ENCODE measurements at regions of chr20 and their contacts with region 1.

Region 1: DNA sequence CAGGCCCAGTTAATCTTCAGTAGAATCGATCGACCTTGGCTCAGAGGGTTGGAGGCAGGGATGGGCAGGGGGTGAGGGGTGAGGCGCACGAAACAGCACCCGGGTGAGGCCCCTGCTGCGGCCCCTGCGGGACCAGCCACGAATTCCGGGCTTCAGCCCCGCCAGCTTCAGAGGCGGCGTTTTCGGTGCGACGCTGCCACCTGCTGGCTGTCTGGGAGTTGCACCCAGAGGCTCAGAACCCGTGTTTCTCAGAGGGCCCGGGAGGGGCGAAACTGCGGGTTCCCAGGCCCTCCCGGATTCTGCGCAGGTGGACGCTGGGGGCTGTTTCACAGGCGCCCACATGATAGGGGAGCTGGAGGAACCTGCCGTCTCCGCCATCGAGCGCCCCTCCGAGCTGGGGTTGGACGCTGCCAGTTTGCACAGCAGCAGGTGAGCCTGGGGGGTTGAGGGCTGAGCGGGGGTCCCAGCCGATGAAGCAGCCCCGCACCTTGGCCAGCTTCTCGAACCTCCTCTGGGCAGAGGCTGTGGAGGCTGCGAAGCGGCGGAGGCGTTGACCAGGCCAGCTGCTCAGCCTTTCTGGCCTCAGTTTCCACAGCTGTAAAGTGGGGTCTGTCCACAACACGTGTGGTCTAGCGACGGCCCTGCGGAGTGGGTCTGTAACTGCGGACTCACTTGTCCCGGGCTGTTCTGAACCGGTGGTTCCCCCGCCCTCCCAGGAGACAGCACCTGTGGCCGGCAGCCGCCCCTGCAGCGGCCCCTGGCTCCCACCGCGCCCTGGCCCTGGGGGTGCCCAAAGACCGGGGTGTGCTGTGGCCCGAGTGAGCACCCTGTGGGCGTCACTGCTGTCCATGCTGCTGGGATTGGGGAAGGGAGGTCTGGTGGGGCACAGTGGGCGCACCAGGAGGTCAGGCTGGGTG is 2.5 kb upstream of the BHLHE23 start:
- H3K4me3 Mint-ChIP-seq: no peak overlapping the region
- H3K27ac Mint-ChIP-seq: no peak overlapping the region
- H3K4me1 Mint-ChIP-seq: peaks cover 20% of the 10 kb centered on the region
- H3K27me3 Mint-ChIP-seq: peaks cover 93% of the 10 kb centered on the region

Region 2: DNA sequence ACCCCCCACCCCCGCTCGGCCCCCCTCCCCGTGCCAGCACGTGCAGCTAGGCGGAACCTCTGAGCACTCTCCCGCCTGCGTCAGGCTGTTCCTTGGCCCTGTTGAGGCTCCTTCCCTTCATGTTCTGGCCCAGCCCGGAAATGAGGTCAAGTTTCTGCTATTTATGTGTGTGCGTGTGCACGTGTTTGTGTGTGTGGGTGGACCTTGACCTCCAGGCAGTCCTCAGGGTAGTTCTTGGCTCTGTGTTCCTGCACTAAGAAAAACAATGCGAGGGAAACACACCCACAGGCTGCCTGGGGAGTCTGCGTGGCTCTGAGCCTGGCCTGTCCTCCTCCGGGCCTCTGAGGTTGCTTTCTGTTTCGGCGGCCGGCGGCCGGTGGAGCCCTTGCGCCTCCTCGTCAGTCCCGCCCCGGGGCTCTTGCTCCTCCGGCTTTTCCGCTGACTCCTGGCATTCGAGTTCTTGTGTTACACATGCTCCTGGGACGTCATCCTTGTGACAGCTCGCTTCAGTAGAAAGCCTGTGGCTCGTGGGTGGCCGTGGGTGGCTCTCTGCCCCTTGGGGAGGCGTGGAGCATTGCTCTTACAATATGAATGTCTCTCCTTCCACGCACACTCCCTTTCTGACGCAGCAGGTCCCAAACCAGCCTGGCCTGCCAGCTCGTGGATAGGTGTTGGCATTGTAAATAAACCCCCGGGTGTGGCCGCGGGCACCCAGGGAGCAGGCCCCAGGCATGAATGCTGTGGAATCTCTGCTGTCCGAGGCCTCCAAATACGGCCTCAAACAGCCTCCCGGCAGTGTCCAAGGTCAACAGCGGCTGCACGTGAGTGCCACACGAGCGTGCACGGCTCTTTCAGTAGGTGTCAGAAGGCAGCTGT is 357.0 kb before region 1 on chr20:
- intact Hi-C with region 1: no loop called
- H3K4me3 Mint-ChIP-seq: peak overlapping the region; percentile 60
- H3K27ac Mint-ChIP-seq: peak overlapping the region; percentile 94
- H3K4me1 Mint-ChIP-seq: peaks cover 42% of the 10 kb centered on the region
- H3K27me3 Mint-ChIP-seq: peaks cover 8% of the 10 kb centered on the region

Region 3: DNA sequence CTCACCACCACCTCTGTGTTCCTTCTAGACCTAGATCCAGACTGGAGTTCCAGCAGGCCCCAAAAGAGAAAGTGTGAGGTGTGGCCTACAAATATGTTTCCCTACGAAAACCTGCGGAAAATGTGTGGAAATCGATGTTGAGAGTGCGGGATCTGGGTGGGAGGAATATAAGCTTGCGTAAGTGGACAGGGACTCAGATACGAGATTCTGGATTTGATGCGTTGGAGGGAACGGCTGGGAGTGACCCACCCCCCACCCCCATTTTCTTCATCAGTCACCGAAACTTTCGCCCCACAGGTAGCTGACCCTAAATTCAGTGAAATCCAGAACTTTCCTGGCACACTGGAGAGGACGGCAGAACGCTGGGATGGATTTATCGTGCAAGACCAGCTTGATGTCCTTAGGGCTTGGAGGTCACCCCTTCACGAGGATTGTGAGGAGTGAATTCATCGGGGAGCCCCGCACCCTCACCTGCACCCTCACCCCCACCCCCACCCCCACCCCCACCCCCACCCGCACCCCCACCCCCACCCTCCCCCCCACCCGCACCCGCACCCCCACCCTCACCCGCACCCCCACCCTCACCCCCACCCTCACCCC is 134.5 kb before region 1 on chr20:
- intact Hi-C with region 1: loop called (anchors 5 kb)
- H3K4me3 Mint-ChIP-seq: no peak overlapping the region
- H3K27ac Mint-ChIP-seq: peak overlapping the region; percentile 39
- H3K4me1 Mint-ChIP-seq: peaks cover 44% of the 10 kb centered on the region
- H3K27me3 Mint-ChIP-seq: peaks cover 21% of the 10 kb centered on the region

Region 4: DNA sequence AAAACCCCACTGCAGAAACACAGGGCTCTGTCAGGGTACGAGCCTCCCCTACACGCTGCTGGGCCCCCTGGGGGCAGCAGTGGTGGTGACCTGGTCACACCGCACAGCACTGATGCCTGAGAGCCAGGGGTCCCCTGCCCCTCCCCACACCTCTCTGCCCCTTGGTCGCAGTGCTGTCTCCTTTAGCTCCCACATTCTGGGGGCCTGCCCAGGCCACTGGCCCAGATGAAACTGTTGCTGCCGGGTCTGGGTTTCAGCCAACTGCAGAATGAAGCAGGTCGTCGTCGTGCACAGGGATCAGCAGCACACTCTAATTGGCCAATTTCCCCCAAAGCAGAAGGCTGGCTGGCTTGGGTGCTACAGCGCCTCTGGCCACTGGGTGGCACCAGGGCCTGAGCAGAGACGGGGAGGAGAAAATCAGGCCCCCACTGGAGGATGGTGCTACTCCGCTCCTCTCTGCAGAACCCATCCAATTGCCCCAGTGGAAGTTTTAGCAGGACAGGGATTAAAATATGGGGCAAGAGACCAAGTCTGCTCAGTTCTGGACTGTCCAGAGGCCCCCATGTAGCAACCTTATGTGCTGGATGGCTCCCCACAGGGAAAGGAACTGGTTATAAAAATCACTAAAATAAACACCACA is 109.1 kb before region 1 on chr20:
- intact Hi-C with region 1: loop called (anchors 10 kb)
- H3K4me3 Mint-ChIP-seq: no peak overlapping the region
- H3K27ac Mint-ChIP-seq: no peak overlapping the region
- H3K4me1 Mint-ChIP-seq: peaks cover 15% of the 10 kb centered on the region
- H3K27me3 Mint-ChIP-seq: no peaks in the 10 kb centered on the region

Region 5: GRCh38 chr20:62972270-62973032 is 36.9 kb before region 1 on chr20:
- intact Hi-C with region 1: loop called (anchors 1 kb)
- H3K4me3 Mint-ChIP-seq: no peak overlapping the region
- H3K27ac Mint-ChIP-seq: no peak overlapping the region
- H3K4me1 Mint-ChIP-seq: peaks cover 16% of the 10 kb centered on the region
- H3K27me3 Mint-ChIP-seq: peaks cover 75% of the 10 kb centered on the region

Measured in dendritic cell treated with granulocyte-macrophage colony-stimulating factor and Interleukin-4, amounts not matched to agents 40 ng/mL and 50 ng/mL, for 4 days (primary cell).